Activated B cell treated with CpG ODN at 0.5 μM for 24 hours (primary cell): ENCODE measurements at regions of chr15 and their contacts with region 1.

Region 1: DNA sequence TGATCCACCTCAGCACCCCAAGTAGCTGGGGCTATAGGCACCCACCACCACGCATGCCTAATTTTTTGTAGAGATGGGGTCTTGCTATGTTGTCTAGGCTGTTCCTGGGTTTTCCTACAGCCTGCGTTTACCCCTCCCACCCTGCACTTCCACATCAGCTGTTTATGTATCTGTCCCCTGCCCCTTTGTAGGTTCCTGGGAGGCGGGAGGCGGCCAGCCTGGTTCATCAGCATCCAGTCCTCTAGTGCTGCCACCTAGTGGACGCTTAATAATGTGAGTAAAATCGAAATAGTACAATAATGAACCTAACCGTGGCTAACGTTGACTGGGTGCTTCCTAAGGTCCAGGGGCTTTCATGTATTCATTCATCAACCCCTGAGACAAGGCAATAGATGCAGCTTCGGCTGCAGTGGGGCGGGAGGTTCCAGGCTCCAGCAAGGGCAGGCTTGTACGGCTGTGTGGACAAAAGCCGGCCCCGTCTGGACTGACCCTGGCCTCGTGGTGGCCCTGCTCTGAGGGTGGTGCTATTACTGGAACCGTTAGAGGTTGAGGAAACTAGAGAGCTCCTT is 1.2 kb upstream of the LCTL start:
- DNase-seq: peak; percentile 21
- ATAC-seq: peak; percentile 64
- H3K4me3 Mint-ChIP-seq: no peak overlapping the region
- H3K27ac Mint-ChIP-seq: no peak overlapping the region
- H3K4me1 Mint-ChIP-seq: peaks cover 5% of the 10 kb centered on the region
- H3K27me3 Mint-ChIP-seq: no peaks in the 10 kb centered on the region
- CTCF ChIP-seq: no peak

Region 2: GRCh38 chr15:66603301-66604179 is 36.5 kb after region 1 on chr15:
- CTCF ChIA-PET with region 1: no interaction called
- POLR2A ChIA-PET with region 1: no interaction called
- intact Hi-C with region 1: no loop called
- DNase-seq: peak; percentile 56
- ATAC-seq: peak; percentile 65
- H3K4me3 Mint-ChIP-seq: no peak overlapping the region
- H3K27ac Mint-ChIP-seq: no peak overlapping the region
- H3K4me1 Mint-ChIP-seq: no peaks in the 10 kb centered on the region
- H3K27me3 Mint-ChIP-seq: peaks cover 8% of the 10 kb centered on the region
- CTCF ChIP-seq: no peak

Region 3: DNA sequence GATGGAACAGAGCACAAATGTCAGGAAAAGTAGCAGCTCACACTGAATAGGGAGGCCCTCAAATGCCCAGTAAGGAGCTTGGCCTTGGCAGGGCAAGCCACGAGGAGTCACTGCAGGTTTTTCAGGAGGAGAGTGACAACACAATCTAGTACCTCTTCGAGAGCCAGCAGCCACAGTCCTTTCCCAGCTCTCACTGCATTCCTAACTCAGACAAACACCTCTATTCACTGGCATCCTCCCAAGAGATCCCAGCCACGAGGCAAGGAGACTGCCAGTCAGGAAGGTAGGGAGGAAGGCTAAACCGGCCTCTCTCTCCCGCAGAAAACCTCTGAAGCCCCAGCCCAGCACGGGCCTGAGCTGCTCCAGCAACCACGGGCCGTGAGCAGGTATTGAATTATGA is 352.4 kb after region 1 on chr15:
- CTCF ChIA-PET with region 1: no interaction called
- POLR2A ChIA-PET with region 1: interaction called, 12 read pairs
- intact Hi-C with region 1: no loop called
- DNase-seq: no peak
- ATAC-seq: no peak
- H3K4me3 Mint-ChIP-seq: no peak overlapping the region
- H3K27ac Mint-ChIP-seq: no peak overlapping the region
- H3K4me1 Mint-ChIP-seq: peaks cover 8% of the 10 kb centered on the region
- H3K27me3 Mint-ChIP-seq: peaks cover 29% of the 10 kb centered on the region
- CTCF ChIP-seq: no peak